ENCODE measurements at regions of chr6 and their contacts with region 1.

Region 1: GRCh38 chr6:161536224-161536630 is 262.4 kb upstream of the AGPAT4 start:
- DNase-seq: no peak
- ATAC-seq: no peak
- H3K4me3 ChIP-seq: no peak overlapping the region
- H3K4me1 ChIP-seq: no peaks in the 10 kb centered on the region
- CTCF ChIP-seq: no peak

Region 2: DNA sequence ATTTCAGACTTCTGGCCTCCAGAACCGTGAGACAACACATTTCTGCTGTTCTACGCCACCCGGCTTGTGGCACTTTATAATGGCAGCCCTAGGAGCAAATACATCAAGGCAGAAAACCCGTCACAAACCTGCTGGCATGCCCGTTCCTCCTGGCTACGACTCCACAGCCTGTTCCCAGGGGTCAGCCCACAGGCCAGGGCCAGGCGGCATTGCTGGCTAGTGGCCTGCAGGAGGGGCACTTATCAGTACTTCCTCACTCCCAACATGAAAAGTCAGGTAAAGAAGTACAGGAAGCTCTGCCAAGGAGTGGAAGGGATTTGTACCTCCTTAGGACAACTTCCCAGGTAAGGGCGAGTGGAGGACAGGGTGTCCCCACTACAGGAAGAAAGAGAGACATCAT is 39.3 kb before region 1 on chr6:
- intact Hi-C with region 1: loop called in 1 of 2 experiments (anchors 2 kb)
- DNase-seq: no peak
- ATAC-seq: no peak
- H3K4me3 ChIP-seq: no peak overlapping the region
- H3K4me1 ChIP-seq: no peaks in the 10 kb centered on the region
- CTCF ChIP-seq: no peak